CD4-positive, alpha-beta T cell (primary cell): ENCODE measurements at regions of chr2 and their contacts with region 1.

Region 1: DNA sequence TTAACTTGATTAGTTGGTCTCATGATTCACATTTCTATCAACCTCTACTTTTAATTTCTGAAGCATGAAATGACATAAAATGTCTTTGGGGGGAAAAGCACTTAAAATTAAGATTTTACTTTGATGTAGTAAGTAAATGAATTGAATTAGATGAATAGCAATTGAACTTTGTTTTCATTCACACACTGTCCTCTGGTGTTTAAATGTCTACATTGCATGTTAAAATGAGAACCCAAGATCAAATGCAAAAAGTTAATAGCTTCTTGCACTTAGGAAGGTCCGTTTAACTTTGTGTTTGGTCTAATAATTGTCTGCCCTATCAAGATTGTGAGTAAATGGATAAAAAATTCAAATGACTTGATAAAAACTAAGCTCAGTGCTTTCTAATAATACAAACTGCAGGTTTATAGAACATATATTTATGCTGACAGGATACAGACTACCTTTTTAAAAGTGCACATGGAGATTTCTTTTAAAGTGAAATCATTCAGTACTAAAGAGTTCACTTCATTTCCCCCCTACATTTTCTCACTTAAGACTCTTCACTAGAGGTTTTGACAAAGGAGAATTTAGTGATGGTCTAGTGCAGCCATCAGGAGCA is 156.2 kb upstream of the NABP1 start:
- DNase-seq: peak in 3 of 14 experiments; percentile 36 to 42 (median 36)
- ATAC-seq: peak; percentile 49
- H3K4me3 ChIP-seq: no peak overlapping the region
- H3K4me3 Mint-ChIP-seq: no peak overlapping the region
- H3K27ac ChIP-seq: no peak overlapping the region
- H3K27ac Mint-ChIP-seq: no peak overlapping the region
- H3K4me1 ChIP-seq: no peaks in the 10 kb centered on the region
- H3K4me1 Mint-ChIP-seq: no peaks in the 10 kb centered on the region
- H3K27me3 ChIP-seq: no peaks in the 10 kb centered on the region
- H3K27me3 Mint-ChIP-seq: no peaks in the 10 kb centered on the region
- CTCF ChIP-seq: peak; percentile 86

Region 2: DNA sequence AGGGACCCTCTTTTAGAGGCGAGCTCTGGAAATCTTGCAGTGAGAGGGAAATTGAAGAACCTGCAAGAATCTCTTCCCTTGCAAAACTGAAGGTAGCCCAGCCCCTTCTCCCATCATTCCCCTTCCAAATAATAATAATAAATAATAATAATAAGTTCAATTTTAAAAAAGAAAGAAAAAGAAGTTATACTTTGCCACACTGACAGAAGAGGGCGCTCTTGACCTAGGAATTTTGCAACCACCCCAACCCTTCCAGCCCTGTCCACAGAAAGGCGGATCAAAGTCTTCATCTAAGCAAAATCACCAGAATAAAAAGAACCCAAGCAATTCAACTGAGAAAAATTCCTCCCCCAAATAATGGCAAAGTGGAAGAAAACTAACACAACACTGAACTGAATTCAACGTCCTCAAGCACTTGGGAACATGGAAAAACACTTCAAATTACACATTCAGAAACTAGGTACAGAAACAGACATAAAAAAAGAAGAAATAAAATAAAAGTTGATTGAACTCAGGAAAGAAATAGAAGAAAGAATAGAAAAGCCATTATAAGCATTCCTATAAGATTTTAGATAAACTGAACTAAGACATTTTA is 740.0 kb before region 1 on chr2:
- CTCF ChIA-PET with region 1: no interaction called
- POLR2A ChIA-PET with region 1: no interaction called
- intact Hi-C with region 1: loop called in 1 of 2 experiments (anchors 2 kb)
- DNase-seq: peak in 12 of 14 experiments; percentile 15 to 76 (median 29)
- ATAC-seq: peak; percentile 70
- H3K4me3 ChIP-seq: no peak overlapping the region
- H3K4me3 Mint-ChIP-seq: no peak overlapping the region
- H3K27ac ChIP-seq: no peak overlapping the region
- H3K27ac Mint-ChIP-seq: no peak overlapping the region
- H3K4me1 ChIP-seq: peaks cover 2% of the 10 kb centered on the region
- H3K4me1 Mint-ChIP-seq: no peaks in the 10 kb centered on the region
- H3K27me3 ChIP-seq: no peaks in the 10 kb centered on the region
- H3K27me3 Mint-ChIP-seq: no peaks in the 10 kb centered on the region
- CTCF ChIP-seq: peak; percentile 65

Region 3: GRCh38 chr2:191165176-191165643 is 356.5 kb before region 1 on chr2:
- CTCF ChIA-PET with region 1: interaction called, 22 read pairs
- POLR2A ChIA-PET with region 1: interaction called, 5 read pairs
- intact Hi-C with region 1: loop called (anchors 1 kb)
- DNase-seq: peak in 6 of 14 experiments; percentile 18 to 73 (median 52)
- ATAC-seq: peak; percentile 75
- H3K4me3 ChIP-seq: no peak overlapping the region
- H3K4me3 Mint-ChIP-seq: no peak overlapping the region
- H3K27ac ChIP-seq: no peak overlapping the region
- H3K27ac Mint-ChIP-seq: no peak overlapping the region
- H3K4me1 ChIP-seq: no peaks in the 10 kb centered on the region
- H3K4me1 Mint-ChIP-seq: peaks cover 6% of the 10 kb centered on the region
- H3K27me3 ChIP-seq: no peaks in the 10 kb centered on the region
- H3K27me3 Mint-ChIP-seq: no peaks in the 10 kb centered on the region
- CTCF ChIP-seq: peak; percentile 85